Activated B cell treated with CpG ODN at 0.5 μM for 24 hours (primary cell): ENCODE measurements at regions of chr6 and their contacts with region 1.

Region 1: DNA sequence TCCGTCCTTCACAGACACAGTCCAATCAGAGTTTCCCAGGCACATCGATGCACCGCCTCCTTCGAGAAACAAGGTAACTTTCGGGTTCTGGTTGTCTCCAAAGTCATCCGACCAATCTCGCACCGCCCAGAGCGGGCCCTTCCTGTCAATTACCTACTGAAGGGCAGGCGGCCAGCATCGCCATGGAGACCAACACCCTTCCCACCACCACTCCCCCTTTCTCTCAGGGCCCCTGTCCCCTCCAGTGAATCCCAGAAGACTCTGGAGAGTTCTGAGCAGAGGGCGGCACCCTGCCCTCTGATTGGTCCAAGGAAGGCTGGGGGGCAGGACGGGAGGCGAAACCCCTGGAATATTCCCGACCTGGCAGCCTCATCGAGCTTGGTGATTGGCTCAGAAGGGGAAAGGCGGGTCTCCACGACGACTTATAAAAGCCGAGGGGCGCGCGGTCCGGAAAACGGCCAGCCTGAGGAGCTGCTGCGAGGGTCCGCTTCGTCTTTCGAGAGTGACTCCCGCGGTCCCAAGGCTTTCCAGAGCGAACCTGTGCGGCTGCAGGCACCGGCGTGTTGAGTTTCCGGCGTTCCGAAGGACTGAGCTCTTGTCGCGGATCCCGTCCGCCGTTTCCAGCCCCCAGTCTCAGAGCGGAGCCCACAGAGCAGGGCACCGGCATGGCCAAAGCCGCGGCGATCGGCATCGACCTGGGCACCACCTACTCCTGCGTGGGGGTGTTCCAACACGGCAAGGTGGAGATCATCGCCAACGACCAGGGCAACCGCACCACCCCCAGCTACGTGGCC is at the start of gene HSPA1B:
- DNase-seq: peak; percentile 70
- ATAC-seq: peak; percentile 76
- H3K4me3 Mint-ChIP-seq: peak within 1 kb of the TSS; percentile 91
- H3K27ac Mint-ChIP-seq: peak within 1 kb of the TSS; percentile 99
- H3K4me1 Mint-ChIP-seq: peaks cover 40% of the 10 kb centered on the region
- H3K27me3 Mint-ChIP-seq: no peaks in the 10 kb centered on the region
- CTCF ChIP-seq: no peak
- total RNA-seq, gene HSPA1B: 23.7 and 30.4 TPM in 2 replicates

Region 2: GRCh38 chr6:31493875-31494694 is 333.4 kb before region 1 on chr6:
- CTCF ChIA-PET with region 1: no interaction called
- POLR2A ChIA-PET with region 1: interaction called, 3 read pairs
- intact Hi-C with region 1: loop called (anchors 1 kb)
- DNase-seq: peak; percentile 76
- ATAC-seq: peak; percentile 48
- H3K4me3 Mint-ChIP-seq: peak overlapping the region; percentile 90
- H3K27ac Mint-ChIP-seq: peak overlapping the region; percentile 92
- H3K4me1 Mint-ChIP-seq: peaks cover 54% of the 10 kb centered on the region
- H3K27me3 Mint-ChIP-seq: no peaks in the 10 kb centered on the region
- CTCF ChIP-seq: no peak

Region 3: DNA sequence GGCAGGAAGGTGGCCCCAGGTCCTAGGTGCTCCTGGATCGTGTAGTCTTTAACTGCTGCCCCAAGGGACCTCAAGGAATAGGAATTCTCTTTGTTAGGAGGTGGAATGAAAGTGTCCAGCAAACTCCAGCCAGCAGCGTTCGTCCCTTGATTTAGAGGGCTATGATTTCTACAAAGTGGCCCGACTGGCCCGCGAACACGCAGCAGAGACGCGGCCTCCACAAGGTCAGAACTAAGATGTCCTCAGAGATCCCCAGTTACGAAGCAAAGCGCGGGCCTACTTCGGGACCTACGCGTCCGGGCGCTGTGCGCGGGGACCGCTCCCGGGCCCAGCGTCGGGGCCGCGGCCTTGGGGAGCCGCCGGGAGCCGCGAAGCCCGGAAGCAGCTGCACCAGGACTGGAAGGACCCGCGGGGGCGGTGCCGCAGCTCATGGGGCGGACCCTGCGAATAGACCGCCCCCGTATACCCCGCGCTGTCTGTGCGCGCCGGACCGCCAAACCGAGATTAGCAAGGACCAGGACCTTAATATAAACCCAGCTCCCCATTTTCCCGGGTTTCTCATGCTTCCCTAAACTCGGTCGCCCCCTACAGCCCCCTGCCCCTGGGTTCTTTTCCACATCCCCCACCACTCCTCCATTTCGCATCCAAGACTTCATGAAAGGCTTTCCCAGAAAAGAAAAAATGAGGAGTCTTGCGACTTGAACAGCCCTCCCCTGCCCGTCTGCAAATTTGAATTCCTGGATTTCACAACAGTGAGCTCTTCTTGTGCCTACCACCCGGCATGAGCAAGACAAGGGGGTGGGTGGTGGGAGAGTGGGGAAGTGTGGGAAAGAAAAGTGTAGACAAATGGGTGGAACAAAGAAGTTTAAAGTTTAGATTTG is 166.9 kb before region 1 on chr6 and contains the start of gene C6orf47:
- CTCF ChIA-PET with region 1: interaction called, 3 read pairs
- POLR2A ChIA-PET with region 1: interaction called, 14 read pairs
- intact Hi-C with region 1: loop called (anchors 1 kb)
- DNase-seq: peak; percentile 77
- ATAC-seq: peak; percentile 68
- H3K4me3 Mint-ChIP-seq: peak within 1 kb of the TSS; percentile 88
- H3K27ac Mint-ChIP-seq: peak within 1 kb of the TSS; percentile 85
- H3K4me1 Mint-ChIP-seq: peaks cover 75% of the 10 kb centered on the region
- H3K27me3 Mint-ChIP-seq: no peaks in the 10 kb centered on the region
- CTCF ChIP-seq: no peak
- total RNA-seq, gene C6orf47: 29.0 and 29.3 TPM in 2 replicates

Region 4: GRCh38 chr6:31687321-31687720 is 140.2 kb before region 1 on chr6:
- CTCF ChIA-PET with region 1: interaction called, 3 read pairs
- POLR2A ChIA-PET with region 1: interaction called, 12 read pairs
- intact Hi-C with region 1: no loop called
- DNase-seq: no peak
- ATAC-seq: no peak
- H3K4me3 Mint-ChIP-seq: no peak overlapping the region
- H3K27ac Mint-ChIP-seq: no peak overlapping the region
- H3K4me1 Mint-ChIP-seq: peaks cover 20% of the 10 kb centered on the region
- H3K27me3 Mint-ChIP-seq: no peaks in the 10 kb centered on the region
- CTCF ChIP-seq: no peak

Region 5: GRCh38 chr6:31729515-31729978 is 97.9 kb before region 1 on chr6:
- CTCF ChIA-PET with region 1: interaction called, 14 read pairs
- POLR2A ChIA-PET with region 1: interaction called, 31 read pairs
- intact Hi-C with region 1: loop called (anchors 1 kb)
- DNase-seq: peak; percentile 73
- ATAC-seq: peak; percentile 45
- H3K4me3 Mint-ChIP-seq: peak overlapping the region; percentile 97
- H3K27ac Mint-ChIP-seq: peak overlapping the region; percentile 92
- H3K4me1 Mint-ChIP-seq: peaks cover 71% of the 10 kb centered on the region
- H3K27me3 Mint-ChIP-seq: no peaks in the 10 kb centered on the region
- CTCF ChIP-seq: no peak

Region 6: GRCh38 chr6:31795616-31796298 is 31.7 kb before region 1 on chr6 and contains the start of gene VARS1:
- CTCF ChIA-PET with region 1: interaction called, 9 read pairs
- POLR2A ChIA-PET with region 1: interaction called, 17 read pairs
- intact Hi-C with region 1: no loop called
- DNase-seq: peak; percentile 89
- ATAC-seq: peak; percentile 89
- H3K4me3 Mint-ChIP-seq: peak within 1 kb of the TSS; percentile 98
- H3K27ac Mint-ChIP-seq: peak within 1 kb of the TSS; percentile 98
- H3K4me1 Mint-ChIP-seq: peaks cover 65% of the 10 kb centered on the region
- H3K27me3 Mint-ChIP-seq: no peaks in the 10 kb centered on the region
- CTCF ChIP-seq: no peak
- total RNA-seq, gene VARS1: 136 and 140 TPM in 2 replicates

Region 7: DNA sequence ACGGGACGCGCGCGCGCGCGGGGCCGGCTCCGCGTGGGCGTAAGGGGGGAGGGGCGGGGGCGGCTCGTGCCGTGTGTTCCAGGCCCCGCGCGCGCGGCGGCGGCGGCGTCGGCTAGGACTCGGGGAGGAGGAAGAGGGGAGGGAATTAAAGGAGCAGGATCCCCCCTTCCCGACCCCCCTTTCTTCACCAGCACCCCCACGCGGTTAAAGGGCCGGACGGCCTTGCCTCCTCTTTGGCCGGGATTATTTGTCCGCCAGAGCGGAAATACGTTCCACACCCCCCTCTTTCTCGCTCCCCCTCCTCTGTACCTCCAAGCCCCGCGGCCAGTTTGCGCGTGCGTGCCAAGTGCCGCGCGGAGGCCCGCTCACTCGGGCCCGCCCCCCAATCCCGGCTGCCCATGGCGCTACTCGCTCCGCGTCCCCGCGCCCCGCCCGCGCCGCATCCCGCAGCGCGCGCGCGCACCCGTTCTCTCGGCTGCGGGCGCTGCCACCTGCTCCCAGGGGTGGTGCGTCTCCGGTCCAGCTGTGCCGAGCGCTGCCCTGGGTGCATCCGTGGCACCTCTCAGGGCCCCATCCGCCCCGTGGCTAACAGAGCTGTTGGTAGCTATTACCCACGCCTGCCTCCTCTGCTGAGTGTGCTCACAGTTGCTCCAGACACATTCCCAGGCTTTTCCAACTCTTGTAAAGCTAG is 74.6 kb after region 1 on chr6 and contains the start of gene ZBTB12:
- CTCF ChIA-PET with region 1: no interaction called
- POLR2A ChIA-PET with region 1: interaction called, 12 read pairs
- intact Hi-C with region 1: no loop called
- DNase-seq: peak; percentile 83
- ATAC-seq: peak; percentile 69
- H3K4me3 Mint-ChIP-seq: peak within 1 kb of the TSS; percentile 89
- H3K27ac Mint-ChIP-seq: peak within 1 kb of the TSS; percentile 86
- H3K4me1 Mint-ChIP-seq: peaks cover 27% of the 10 kb centered on the region
- H3K27me3 Mint-ChIP-seq: no peaks in the 10 kb centered on the region
- CTCF ChIP-seq: no peak
- total RNA-seq, gene ZBTB12: 4.8 and 5.5 TPM in 2 replicates